Activated CD8-positive, alpha-beta T cell treated with anti-CD3 and anti-CD28 coated beads for 36 hours (primary cell): ENCODE measurements at regions of chr3 and their contacts with region 1.

Region 1: GRCh38 chr3:187025656-187026316 is 95.5 kb downstream of the ST6GAL1 start:
- DNase-seq: peak; percentile 68
- ATAC-seq: peak; percentile 38
- H3K4me3 Mint-ChIP-seq: peak overlapping the region; percentile 84
- H3K27ac Mint-ChIP-seq: peak overlapping the region; percentile 98
- H3K4me1 Mint-ChIP-seq: peaks cover 46% of the 10 kb centered on the region
- H3K27me3 Mint-ChIP-seq: no peaks in the 10 kb centered on the region
- CTCF ChIP-seq: no peak

Region 2: DNA sequence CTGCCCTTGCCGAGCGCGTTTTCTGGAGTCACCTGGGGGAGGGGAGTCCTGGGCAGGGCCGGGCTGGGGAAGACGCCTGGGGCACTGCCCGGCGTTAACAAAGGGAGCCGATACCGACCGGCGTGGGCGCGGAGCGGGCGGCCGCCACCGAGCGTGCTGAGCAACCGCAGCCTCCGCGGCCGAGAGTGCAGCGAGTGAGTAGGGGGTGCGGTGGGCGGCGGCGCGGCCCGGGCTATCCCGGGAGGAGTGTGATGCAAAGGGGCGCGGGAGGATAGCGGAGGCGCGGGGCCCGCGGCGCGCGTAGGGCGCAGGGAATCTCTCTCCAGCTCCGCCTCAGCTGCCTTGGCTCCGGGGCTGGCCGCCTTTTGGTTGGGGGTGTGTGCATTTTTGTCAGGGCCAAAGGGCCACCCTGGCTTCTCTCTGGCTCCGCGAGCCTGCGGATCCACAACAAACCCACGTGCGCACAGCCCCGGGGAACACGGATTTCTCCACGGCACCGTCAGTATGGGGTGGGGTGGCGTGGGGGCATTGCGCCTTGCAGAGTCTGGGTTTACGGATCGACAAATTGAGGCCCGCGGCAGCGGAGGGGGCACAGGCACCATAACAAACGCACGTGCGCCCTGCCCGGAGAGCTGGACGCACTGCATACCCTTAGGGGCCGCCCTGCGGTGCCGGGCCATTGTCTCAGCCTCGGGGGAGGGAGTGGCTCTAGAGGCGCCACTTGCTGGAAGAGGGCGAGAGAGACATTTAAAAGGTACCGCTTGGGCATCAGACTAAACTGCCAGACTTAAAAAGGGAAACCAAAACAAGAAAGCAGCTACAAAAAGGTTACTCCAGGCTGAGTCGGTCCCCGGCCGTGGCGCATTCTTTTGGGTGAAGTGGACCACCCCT is 94.9 kb before region 1 on chr3:
- CTCF ChIA-PET with region 1: interaction called, 12 read pairs
- POLR2A ChIA-PET with region 1: interaction called, 39 read pairs
- intact Hi-C with region 1: loop called (anchors 5 kb)
- DNase-seq: peak; percentile 73
- ATAC-seq: peak; percentile 77
- H3K4me3 Mint-ChIP-seq: peak overlapping the region; percentile 97
- H3K27ac Mint-ChIP-seq: peak overlapping the region; percentile 93
- H3K4me1 Mint-ChIP-seq: peaks cover 30% of the 10 kb centered on the region
- H3K27me3 Mint-ChIP-seq: no peaks in the 10 kb centered on the region
- CTCF ChIP-seq: no peak

Region 3: GRCh38 chr3:187000711-187001151 is 25.1 kb before region 1 on chr3:
- CTCF ChIA-PET with region 1: interaction called, 4 read pairs
- POLR2A ChIA-PET with region 1: interaction called, 16 read pairs
- intact Hi-C with region 1: no loop called
- DNase-seq: peak; percentile 64
- ATAC-seq: peak; percentile 86
- H3K4me3 Mint-ChIP-seq: peak overlapping the region; percentile 11
- H3K27ac Mint-ChIP-seq: peak overlapping the region; percentile 89
- H3K4me1 Mint-ChIP-seq: peaks cover 63% of the 10 kb centered on the region
- H3K27me3 Mint-ChIP-seq: no peaks in the 10 kb centered on the region
- CTCF ChIP-seq: no peak

Region 4: GRCh38 chr3:187051066-187051465 is 25.3 kb after region 1 on chr3:
- CTCF ChIA-PET with region 1: interaction called, 6 read pairs
- POLR2A ChIA-PET with region 1: interaction called, 17 read pairs
- intact Hi-C with region 1: no loop called
- DNase-seq: peak; percentile 48
- ATAC-seq: peak; percentile 52
- H3K4me3 Mint-ChIP-seq: no peak overlapping the region
- H3K27ac Mint-ChIP-seq: peak overlapping the region; percentile 80
- H3K4me1 Mint-ChIP-seq: peaks cover 53% of the 10 kb centered on the region
- H3K27me3 Mint-ChIP-seq: no peaks in the 10 kb centered on the region
- CTCF ChIP-seq: no peak